AG04449 (cell line): ENCODE measurements at regions of chr11 and their contacts with region 1.

Region 1: GRCh38 chr11:57657194-57658022 is at the start of gene CLP1:
- DNase-seq: peak; percentile 88
- H3K4me3 ChIP-seq: peak within 1 kb of the TSS; percentile 88
- CTCF ChIP-seq: no peak

Region 2: GRCh38 chr11:57667736-57668435 is 10.5 kb after region 1 on chr11 and contains the start of gene ZDHHC5:
- CTCF ChIA-PET with region 1: interaction called, 16 read pairs
- POLR2A ChIA-PET with region 1: no interaction called
- DNase-seq: peak; percentile 98
- H3K4me3 ChIP-seq: peak within 1 kb of the TSS; percentile 94
- CTCF ChIP-seq: peak; percentile 14